ENCODE measurements at regions of chr9 and their contacts with region 1.

Region 1: DNA sequence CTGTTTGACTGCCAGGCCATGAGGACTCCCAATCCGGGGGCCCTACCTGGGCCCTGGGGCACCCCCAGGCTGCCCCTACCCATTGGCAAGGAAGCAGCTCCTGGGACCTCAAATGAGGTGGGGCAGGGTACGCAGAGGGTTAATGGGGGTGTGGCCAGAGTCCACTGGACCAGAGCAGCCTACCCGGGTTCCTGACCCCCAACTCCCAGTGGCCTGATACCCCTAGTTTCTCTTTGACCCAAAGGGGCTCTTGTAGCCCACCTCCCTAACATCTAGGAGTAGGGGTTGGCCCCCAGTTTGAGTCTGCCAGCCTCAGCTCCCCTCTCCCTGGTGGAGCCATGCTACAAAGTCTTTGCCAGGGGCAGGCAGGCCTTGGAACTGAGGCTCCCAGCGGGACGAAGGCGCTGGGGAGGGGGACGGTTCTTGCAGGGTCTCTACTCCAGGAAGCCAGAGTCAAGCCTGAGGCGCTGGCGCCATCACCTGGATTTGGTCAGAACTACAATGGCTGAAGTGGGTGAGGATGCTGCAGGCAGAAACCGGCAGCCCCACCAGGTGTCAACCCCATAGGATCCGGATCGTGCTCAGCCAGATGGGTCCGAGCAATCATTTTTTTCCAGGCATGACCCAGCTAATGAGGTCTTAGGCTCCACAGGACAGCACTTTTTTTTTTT is 8.4 kb upstream of the CERCAM start:
- DNase-seq: peak; percentile 25
- H3K4me3 Mint-ChIP-seq: no peak overlapping the region
- H3K27ac Mint-ChIP-seq: no peak overlapping the region
- H3K4me1 Mint-ChIP-seq: peaks cover 8% of the 10 kb centered on the region
- H3K27me3 Mint-ChIP-seq: peaks cover 53% of the 10 kb centered on the region

Region 2: DNA sequence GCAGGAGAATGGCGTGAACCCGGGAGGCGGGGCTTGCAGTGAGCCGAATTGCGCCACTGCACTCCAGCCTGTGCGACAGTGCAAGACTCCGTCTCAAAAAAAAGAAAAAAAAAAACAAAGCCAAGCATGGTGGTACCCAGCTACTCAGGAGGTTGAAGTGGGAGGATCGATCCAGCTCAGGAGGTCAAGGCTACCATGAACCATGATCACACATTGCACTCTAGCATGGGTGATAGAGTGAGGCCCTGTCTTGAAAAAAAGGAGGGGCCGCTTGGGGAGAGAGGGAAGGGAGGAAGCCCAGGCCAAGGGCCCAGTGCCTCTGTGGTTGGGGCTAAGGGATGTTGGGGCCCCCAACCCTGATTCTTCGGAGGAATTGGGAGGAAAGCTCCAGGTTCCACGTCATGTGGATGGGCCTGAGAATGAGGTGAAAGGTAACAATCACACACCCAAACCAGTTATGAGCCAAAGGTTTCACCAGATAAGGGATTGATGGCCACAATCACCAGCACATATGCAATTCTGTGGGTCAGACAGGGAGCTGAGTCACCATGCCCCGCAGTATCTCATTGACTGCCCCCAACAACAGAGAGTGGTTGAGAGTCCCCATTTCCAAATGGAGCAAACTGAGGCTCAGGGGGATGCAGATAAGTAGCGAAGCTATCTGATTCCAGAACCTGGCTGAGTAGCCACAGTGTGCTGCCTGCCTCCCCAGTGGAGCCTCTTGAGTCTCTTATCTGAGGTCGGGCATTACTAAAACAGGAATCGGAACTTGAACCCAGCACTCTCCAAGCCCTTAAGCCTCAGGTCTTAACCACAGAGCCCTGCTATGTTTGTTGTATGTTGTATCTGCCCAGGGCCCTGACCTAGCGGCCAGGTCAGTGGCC is 115.7 kb before region 1 on chr9:
- intact Hi-C with region 1: loop called (anchors 10 kb)
- DNase-seq: no peak
- H3K4me3 Mint-ChIP-seq: no peak overlapping the region
- H3K27ac Mint-ChIP-seq: no peak overlapping the region
- H3K4me1 Mint-ChIP-seq: no peaks in the 10 kb centered on the region
- H3K27me3 Mint-ChIP-seq: no peaks in the 10 kb centered on the region

Region 3: DNA sequence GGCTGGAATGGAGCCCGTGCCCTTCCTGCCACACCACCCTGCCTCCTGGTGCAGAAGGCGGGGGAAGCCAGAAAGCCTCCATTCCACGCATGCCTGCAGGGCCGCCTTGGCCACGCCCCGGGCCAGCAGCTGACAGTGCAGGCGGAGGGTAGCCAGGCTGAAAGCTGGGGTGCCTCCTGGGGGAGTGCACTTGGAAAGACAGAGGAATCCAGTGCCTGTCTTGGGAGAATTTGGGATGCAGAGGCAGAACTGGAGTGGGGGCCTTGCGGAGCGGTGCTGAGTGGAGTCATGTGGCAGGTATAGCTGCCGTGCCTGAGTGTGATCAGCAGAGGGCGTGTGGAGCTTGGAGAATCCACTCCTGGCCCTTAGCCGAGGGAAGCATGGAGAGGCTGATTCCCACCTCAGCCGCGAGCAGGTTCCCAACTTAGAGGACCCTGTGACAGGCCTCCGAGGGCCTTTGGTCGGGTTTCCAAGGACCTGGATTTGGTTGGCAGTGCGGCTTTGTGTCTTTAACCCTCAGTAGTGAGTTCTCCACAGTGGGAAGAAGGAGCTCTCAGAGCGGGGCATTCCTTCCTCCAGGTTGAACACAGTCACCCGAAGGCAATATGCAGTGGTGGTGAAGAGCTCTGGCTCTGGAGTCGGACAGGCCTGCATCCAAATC is 50.1 kb before region 1 on chr9:
- intact Hi-C with region 1: loop called (anchors 1 kb)
- DNase-seq: peak; percentile 63
- H3K4me3 Mint-ChIP-seq: peak overlapping the region; percentile 74
- H3K27ac Mint-ChIP-seq: no peak overlapping the region
- H3K4me1 Mint-ChIP-seq: peaks cover 13% of the 10 kb centered on the region
- H3K27me3 Mint-ChIP-seq: no peaks in the 10 kb centered on the region